GM12878 (cell line): ENCODE measurements at regions of chr1 and their contacts with region 1.

Region 1: GRCh38 chr1:84442256-84442655 is 36.8 kb upstream of the RPF1 start:
- DNase-seq: peak; percentile 73
- ATAC-seq: peak; percentile 99
- H3K4me3 ChIP-seq: no peak overlapping the region
- H3K27ac ChIP-seq: no peak overlapping the region
- H3K4me1 ChIP-seq: peaks cover 5% of the 10 kb centered on the region; the same call in 1 of the 2 replicates
- H3K27me3 ChIP-seq: no peaks in the 10 kb centered on the region
- CTCF ChIP-seq: peak; percentile 38 to 78 (median 43); a peak in 4 of 6 replicates
- EP300 ChIP-seq: no peak
- POLR2A ChIP-seq: no peak
- RAD21 ChIP-seq: peak; percentile 88

Region 2: GRCh38 chr1:84398175-84399155 is 43.8 kb before region 1 on chr1 and contains the start of gene DNASE2B:
- CTCF ChIA-PET with region 1: no interaction called
- POLR2A ChIA-PET with region 1: no interaction called
- RAD21 ChIA-PET with region 1: no interaction called
- SMC1A ChIA-PET with region 1: no interaction called
- in situ Hi-C with region 1: no loop called
- intact Hi-C with region 1: no loop called
- DNase-seq: no peak
- ATAC-seq: no peak
- H3K4me3 ChIP-seq: no peak within 1 kb of the TSS
- H3K27ac ChIP-seq: no peak within 1 kb of the TSS
- H3K4me1 ChIP-seq: no peaks in the 10 kb centered on the region
- H3K27me3 ChIP-seq: no peaks in the 10 kb centered on the region
- CTCF ChIP-seq: no peak
- EP300 ChIP-seq: no peak
- POLR2A ChIP-seq: no peak
- RAD21 ChIP-seq: no peak
- polyA plus RNA-seq, gene DNASE2B: not detected

Region 3: DNA sequence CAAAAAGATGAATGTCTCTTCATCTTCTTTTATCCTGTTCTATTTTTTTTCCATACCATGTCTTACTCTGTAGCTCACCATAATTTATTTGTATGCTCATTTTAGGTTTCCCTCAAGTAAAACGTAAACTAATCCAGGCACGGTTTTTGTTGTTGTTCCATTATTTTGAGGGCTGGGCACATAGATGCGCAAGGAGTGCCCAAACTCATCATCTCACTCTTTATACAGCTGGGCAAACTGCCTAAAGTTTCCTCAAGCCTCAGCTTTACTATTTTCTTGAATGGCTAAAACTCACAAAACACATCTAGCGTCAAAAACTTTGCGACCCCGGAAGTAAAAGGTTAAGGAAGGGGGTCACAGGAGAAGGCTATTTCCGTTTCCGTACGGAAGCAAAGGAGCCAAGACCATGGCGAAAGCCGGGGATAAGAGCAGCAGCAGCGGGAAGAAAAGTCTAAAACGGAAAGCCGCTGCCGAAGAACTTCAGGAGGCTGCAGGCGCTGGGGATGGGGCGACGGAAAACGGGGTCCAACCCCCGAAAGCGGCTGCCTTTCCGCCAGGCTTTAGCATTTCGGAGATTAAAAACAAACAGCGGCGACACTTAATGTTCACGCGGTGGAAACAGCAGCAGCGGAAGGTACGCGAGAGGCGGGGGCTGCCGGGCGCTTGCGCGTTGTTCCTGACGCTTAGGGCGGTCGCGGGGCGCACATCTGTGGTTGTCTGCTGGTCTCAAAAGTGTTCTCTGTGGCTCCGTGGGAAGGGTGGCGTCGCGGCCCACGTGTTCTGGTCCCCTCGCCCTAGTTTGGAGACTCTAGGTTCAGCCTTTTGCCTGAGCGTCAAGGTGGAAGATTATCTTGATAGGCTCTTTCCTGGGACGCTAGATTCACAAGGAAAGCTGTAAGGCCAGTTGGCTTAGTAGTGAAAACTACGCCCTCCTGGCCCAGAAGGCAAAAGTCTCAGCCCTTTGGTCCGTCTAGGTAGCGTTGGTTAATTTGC is 36.9 kb after region 1 on chr1 and contains the start of gene RPF1:
- CTCF ChIA-PET with region 1: interaction called, 4 read pairs
- POLR2A ChIA-PET with region 1: no interaction called
- RAD21 ChIA-PET with region 1: interaction called, 4 read pairs
- SMC1A ChIA-PET with region 1: interaction called, 22 read pairs
- in situ Hi-C with region 1: no loop called
- intact Hi-C with region 1: loop called (anchors 1 kb)
- DNase-seq: peak; percentile 49
- ATAC-seq: peak; percentile 96
- H3K4me3 ChIP-seq: peak within 1 kb of the TSS; percentile 87
- H3K27ac ChIP-seq: peak within 1 kb of the TSS; percentile 80
- H3K4me1 ChIP-seq: no peaks in the 10 kb centered on the region
- H3K27me3 ChIP-seq: no peaks in the 10 kb centered on the region
- CTCF ChIP-seq: no peak
- EP300 ChIP-seq: no peak; a peak in 1 of 4 replicates
- POLR2A ChIP-seq: peak; percentile 78
- RAD21 ChIP-seq: no peak
- polyA plus RNA-seq, gene RPF1: 45.0 to 45.5 TPM

Region 4: DNA sequence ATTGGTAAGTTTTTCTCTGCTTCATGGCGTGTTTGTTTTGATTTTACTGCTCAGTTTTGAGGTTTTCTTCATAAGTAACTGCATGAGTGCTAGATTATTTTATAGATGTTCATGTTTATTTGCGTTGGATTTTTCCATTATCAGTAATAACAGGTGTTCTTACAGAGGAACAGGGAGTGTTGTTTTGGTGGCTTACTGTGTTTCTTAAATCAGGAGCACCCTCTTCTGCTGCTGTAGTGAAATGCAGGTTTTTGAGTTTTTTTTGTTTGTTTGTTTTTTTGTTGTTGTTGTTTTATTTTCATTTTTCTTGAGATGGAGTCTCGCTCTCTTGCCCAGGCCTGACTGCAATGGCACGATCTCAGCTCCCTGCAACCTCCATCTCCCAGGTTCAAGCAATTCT is 99.4 kb after region 1 on chr1:
- CTCF ChIA-PET with region 1: interaction called, 8 read pairs
- POLR2A ChIA-PET with region 1: no interaction called
- RAD21 ChIA-PET with region 1: interaction called, 6 read pairs
- SMC1A ChIA-PET with region 1: interaction called, 7 read pairs
- in situ Hi-C with region 1: loop called (anchors 5 kb)
- intact Hi-C with region 1: loop called (anchors 2 kb)
- DNase-seq: no peak
- ATAC-seq: no peak
- H3K4me3 ChIP-seq: no peak overlapping the region
- H3K27ac ChIP-seq: no peak overlapping the region
- H3K4me1 ChIP-seq: no peaks in the 10 kb centered on the region
- H3K27me3 ChIP-seq: no peaks in the 10 kb centered on the region
- CTCF ChIP-seq: peak; percentile 28 to 43 (median 34); a peak in 4 of 6 replicates
- EP300 ChIP-seq: no peak
- POLR2A ChIP-seq: no peak
- RAD21 ChIP-seq: peak; percentile 61

Region 5: GRCh38 chr1:84620720-84621313 is 178.6 kb after region 1 on chr1:
- CTCF ChIA-PET with region 1: interaction called, 31 read pairs
- POLR2A ChIA-PET with region 1: interaction called, 5 read pairs
- RAD21 ChIA-PET with region 1: interaction called, 7 read pairs
- SMC1A ChIA-PET with region 1: interaction called, 23 read pairs
- in situ Hi-C with region 1: loop called (anchors 5 kb)
- intact Hi-C with region 1: loop called (anchors 1 kb)
- DNase-seq: peak; percentile 38
- ATAC-seq: peak; percentile 98
- H3K4me3 ChIP-seq: peak overlapping the region; percentile 78
- H3K27ac ChIP-seq: peak overlapping the region; percentile 47
- H3K4me1 ChIP-seq: no peaks in the 10 kb centered on the region
- H3K27me3 ChIP-seq: no peaks in the 10 kb centered on the region; a peak in 1 of 4 replicates
- CTCF ChIP-seq: peak; percentile 64 to 79 (median 73)
- EP300 ChIP-seq: no peak
- POLR2A ChIP-seq: peak; percentile 44
- RAD21 ChIP-seq: peak; percentile 85

Region 6: DNA sequence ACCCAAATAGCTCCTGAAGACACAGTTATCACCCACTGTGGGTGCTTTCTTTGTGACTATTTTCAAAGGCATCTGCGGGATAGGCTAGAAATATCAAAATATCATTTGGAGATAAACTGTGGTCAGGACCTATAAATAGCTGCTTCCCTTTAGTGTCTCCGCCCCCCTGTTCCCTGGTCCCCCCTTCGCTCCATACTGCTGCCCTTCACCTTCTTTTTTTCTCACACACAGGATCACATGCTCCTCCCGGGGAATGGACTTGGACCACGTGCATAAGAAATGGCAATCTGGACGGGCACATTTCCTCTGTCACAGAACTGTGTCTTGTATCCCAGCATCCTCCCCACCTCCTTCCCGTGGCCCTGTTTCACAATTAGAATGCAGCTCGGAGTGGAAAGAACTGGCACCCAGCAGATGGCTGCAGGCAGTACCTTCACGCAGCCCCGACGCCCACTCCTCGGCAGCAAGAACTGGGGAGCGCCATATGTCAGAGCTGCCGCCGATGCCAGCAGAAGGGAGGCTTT is 316.8 kb after region 1 on chr1:
- CTCF ChIA-PET with region 1: interaction called, 34 read pairs
- POLR2A ChIA-PET with region 1: no interaction called
- RAD21 ChIA-PET with region 1: interaction called, 25 read pairs
- SMC1A ChIA-PET with region 1: interaction called, 18 read pairs
- in situ Hi-C with region 1: loop called (anchors 5 kb)
- intact Hi-C with region 1: no loop called
- DNase-seq: no peak
- ATAC-seq: peak; percentile 54
- H3K4me3 ChIP-seq: no peak overlapping the region
- H3K27ac ChIP-seq: no peak overlapping the region
- H3K4me1 ChIP-seq: no peaks in the 10 kb centered on the region
- H3K27me3 ChIP-seq: peaks cover 0 to 2% of the 10 kb centered on the region in 2 experiments; a peak in 1 of 4 replicates
- CTCF ChIP-seq: no peak
- EP300 ChIP-seq: no peak
- POLR2A ChIP-seq: no peak
- RAD21 ChIP-seq: no peak

Region 7: DNA sequence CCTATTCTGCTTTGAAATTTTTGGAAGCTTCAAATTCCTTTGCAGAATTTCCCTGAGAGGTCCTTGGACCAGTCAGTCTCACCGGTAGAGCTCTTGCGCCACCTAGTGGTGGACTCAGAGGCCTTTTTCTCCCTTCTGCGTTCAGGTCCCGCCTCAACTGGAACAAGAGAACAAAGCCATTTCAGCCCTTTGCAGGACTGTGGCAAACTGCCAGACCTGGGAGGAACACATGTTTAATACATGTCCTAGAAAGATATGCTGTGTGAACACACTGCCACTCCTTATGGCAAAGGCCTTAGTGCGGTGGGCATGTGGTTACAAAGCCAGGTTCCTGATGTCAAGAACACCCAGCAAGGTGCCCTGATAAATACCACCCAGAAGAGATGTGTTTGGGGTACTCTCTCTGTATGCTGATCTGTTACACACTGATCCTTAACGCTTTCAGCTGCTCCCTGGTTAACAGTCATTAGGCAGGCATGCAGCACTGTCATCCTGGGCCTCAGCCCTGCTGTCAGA is 330.2 kb after region 1 on chr1:
- CTCF ChIA-PET with region 1: interaction called, 13 read pairs
- POLR2A ChIA-PET with region 1: no interaction called
- RAD21 ChIA-PET with region 1: interaction called, 6 read pairs
- SMC1A ChIA-PET with region 1: no interaction called
- in situ Hi-C with region 1: no loop called
- intact Hi-C with region 1: loop called (anchors 5 kb)
- DNase-seq: no peak
- ATAC-seq: peak; percentile 96
- H3K4me3 ChIP-seq: no peak overlapping the region
- H3K27ac ChIP-seq: no peak overlapping the region
- H3K4me1 ChIP-seq: no peaks in the 10 kb centered on the region
- H3K27me3 ChIP-seq: no peaks in the 10 kb centered on the region
- CTCF ChIP-seq: peak; percentile 78 to 89 (median 87)
- EP300 ChIP-seq: no peak
- POLR2A ChIP-seq: no peak
- RAD21 ChIP-seq: peak; percentile 93